HCT116 (cell line): ENCODE measurements at regions of chr10 and their contacts with region 1.

Region 1: GRCh38 chr10:77873536-77874380 is 52.8 kb downstream of the DLG5 start:
- DNase-seq: peak; percentile 73
- ATAC-seq: peak; percentile 89
- H3K4me3 ChIP-seq: peak overlapping the region; percentile 15 to 42; a peak in 3 of 4 replicates
- H3K27ac ChIP-seq: peak overlapping the region; percentile 83
- H3K4me1 ChIP-seq: peaks cover 28 to 50% of the 10 kb centered on the region in 2 experiments
- H3K27me3 ChIP-seq: no peaks in the 10 kb centered on the region
- CTCF ChIP-seq: no peak
- POLR2A ChIP-seq: no peak
- RAD21 ChIP-seq: no peak

Region 2: GRCh38 chr10:77889277-77889903 is 15.6 kb after region 1 on chr10:
- CTCF ChIA-PET with region 1: interaction called, 18 read pairs
- POLR2A ChIA-PET with region 1: interaction called, 9 read pairs
- RAD21 ChIA-PET with region 1: interaction called, 4 read pairs
- intact Hi-C with region 1: no loop called
- DNase-seq: peak; percentile 80
- ATAC-seq: peak; percentile 90
- H3K4me3 ChIP-seq: peak overlapping the region in 1 of 2 experiments; percentile 24; a peak in 2 of 4 replicates
- H3K27ac ChIP-seq: peak overlapping the region; percentile 59
- H3K4me1 ChIP-seq: peaks cover 24 to 37% of the 10 kb centered on the region in 2 experiments
- H3K27me3 ChIP-seq: no peaks in the 10 kb centered on the region
- CTCF ChIP-seq: no peak
- POLR2A ChIP-seq: no peak
- RAD21 ChIP-seq: peak; percentile 26; the same call in 1 of the 2 replicates

Region 3: DNA sequence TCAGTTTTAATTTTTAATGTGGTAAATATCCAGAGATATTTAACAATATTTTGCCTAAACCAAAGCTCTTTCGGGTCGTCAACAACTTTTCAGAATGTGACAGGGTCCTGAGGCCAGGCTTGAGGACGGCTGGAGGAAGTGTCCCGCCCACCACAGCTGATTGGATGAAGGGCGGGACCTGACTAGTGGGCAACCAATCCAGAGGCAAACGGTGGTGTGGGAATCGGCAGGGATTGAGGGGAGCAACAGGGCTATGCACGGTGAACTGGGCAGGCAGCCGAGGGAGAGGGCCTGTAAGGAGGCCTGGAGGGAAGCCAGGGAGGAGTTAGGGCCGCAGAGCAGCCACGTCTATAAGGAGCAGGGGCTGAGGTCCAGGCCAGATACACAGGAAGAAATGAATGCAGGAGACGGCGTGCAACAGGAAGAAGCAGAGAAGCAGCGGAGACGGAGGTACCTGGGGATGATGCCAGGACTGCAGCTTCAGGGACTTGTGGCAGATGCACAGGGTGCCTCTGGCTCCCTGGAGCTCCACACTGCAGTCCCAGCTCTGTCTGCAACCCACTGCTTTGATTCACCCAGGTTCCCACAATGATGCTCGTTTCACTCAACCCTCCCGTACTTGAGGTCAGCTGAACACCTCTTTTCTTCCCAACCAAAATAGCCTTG is 1148.9 kb after region 1 on chr10:
- CTCF ChIA-PET with region 1: no interaction called
- POLR2A ChIA-PET with region 1: no interaction called
- RAD21 ChIA-PET with region 1: no interaction called
- intact Hi-C with region 1: no loop called
- DNase-seq: peak; percentile 35
- ATAC-seq: peak; percentile 100
- H3K4me3 ChIP-seq: peak overlapping the region; percentile 22 to 32; a peak in 2 of 4 replicates
- H3K27ac ChIP-seq: no peak overlapping the region; the same call in 1 of the 2 replicates
- H3K4me1 ChIP-seq: peaks cover 0 to 13% of the 10 kb centered on the region in 2 experiments; a peak in 2 of 4 replicates
- H3K27me3 ChIP-seq: no peaks in the 10 kb centered on the region
- CTCF ChIP-seq: no peak
- POLR2A ChIP-seq: no peak
- RAD21 ChIP-seq: no peak